ENCODE measurements at regions of chr1 and their contacts with region 1.

Region 1: DNA sequence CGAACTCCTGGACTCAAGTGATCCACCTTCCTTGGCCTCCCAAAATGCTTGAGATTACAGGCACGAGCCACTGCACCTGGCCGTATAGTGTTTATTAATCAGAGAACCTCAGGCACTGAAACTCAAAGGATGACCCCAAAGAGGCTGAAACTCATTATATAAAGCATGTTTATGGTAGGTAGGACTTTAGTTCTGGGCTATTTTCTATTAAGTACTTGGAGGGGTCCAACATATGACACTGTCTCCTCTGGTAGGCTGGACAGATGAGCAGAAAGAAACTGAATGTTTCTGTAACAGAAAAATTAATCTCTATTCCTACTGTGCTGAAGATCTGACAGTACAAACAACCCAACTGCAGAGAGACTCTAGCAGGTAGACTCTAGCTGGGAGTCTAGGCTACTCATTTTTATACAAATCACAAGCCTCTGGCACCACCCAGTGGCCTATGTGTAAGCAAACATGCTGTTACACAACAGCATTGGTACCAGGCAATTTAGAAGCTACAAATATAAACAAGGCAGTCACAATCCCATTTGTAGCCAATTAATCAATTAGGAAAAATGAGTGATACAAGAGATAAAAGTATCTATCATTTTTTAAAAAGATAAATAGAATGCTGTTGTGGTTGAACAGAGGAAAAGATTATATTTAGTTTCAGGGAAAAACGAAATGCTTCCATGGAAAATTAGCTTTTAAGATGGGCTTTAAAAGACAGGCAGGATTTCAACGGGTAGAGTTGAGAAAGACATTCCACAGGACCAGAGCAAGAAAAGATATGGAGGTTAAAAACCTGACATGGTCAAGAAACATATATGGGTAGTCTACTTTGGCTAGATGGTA is 10.4 kb downstream of the DCAF8 start:
- DNase-seq: peak; percentile 38
- ATAC-seq: peak; percentile 96
- H3K4me3 ChIP-seq: no peak overlapping the region
- H3K27ac ChIP-seq: no peak overlapping the region
- H3K4me1 ChIP-seq: peaks cover 5 to 11% of the 10 kb centered on the region in 2 experiments; a peak in 3 of 4 replicates
- H3K27me3 ChIP-seq: no peaks in the 10 kb centered on the region
- CTCF ChIP-seq: peak; percentile 69 to 83 (median 71); a peak in 5 of 6 replicates
- POLR2A ChIP-seq: no peak
- RAD21 ChIP-seq: peak; percentile 81

Region 2: GRCh38 chr1:160108888-160109662 is 142.8 kb before region 1 on chr1:
- CTCF ChIA-PET with region 1: interaction called, 30 read pairs
- POLR2A ChIA-PET with region 1: interaction called, 3 read pairs
- RAD21 ChIA-PET with region 1: no interaction called
- intact Hi-C with region 1: loop called (anchors 2 kb)
- DNase-seq: peak; percentile 69
- ATAC-seq: peak; percentile 79
- H3K4me3 ChIP-seq: no peak overlapping the region
- H3K27ac ChIP-seq: no peak overlapping the region; the same call in 1 of the 2 replicates
- H3K4me1 ChIP-seq: peaks cover 3 to 9% of the 10 kb centered on the region in 2 experiments; a peak in 2 of 4 replicates
- H3K27me3 ChIP-seq: no peaks in the 10 kb centered on the region
- CTCF ChIP-seq: peak; percentile 43 to 76 (median 74); a peak in 5 of 6 replicates
- POLR2A ChIP-seq: no peak
- RAD21 ChIP-seq: peak; percentile 49

Region 3: GRCh38 chr1:160219062-160219929 is 32.6 kb before region 1 on chr1:
- CTCF ChIA-PET with region 1: interaction called, 13 read pairs
- POLR2A ChIA-PET with region 1: no interaction called
- RAD21 ChIA-PET with region 1: interaction called in 1 of 2 experiments, 5 read pairs
- intact Hi-C with region 1: no loop called
- DNase-seq: peak; percentile 19
- ATAC-seq: peak; percentile 78
- H3K4me3 ChIP-seq: no peak overlapping the region
- H3K27ac ChIP-seq: no peak overlapping the region
- H3K4me1 ChIP-seq: no peaks in the 10 kb centered on the region
- H3K27me3 ChIP-seq: no peaks in the 10 kb centered on the region
- CTCF ChIP-seq: peak; percentile 36 to 41 (median 40); a peak in 4 of 6 replicates
- POLR2A ChIP-seq: no peak
- RAD21 ChIP-seq: peak; percentile 60

Region 4: DNA sequence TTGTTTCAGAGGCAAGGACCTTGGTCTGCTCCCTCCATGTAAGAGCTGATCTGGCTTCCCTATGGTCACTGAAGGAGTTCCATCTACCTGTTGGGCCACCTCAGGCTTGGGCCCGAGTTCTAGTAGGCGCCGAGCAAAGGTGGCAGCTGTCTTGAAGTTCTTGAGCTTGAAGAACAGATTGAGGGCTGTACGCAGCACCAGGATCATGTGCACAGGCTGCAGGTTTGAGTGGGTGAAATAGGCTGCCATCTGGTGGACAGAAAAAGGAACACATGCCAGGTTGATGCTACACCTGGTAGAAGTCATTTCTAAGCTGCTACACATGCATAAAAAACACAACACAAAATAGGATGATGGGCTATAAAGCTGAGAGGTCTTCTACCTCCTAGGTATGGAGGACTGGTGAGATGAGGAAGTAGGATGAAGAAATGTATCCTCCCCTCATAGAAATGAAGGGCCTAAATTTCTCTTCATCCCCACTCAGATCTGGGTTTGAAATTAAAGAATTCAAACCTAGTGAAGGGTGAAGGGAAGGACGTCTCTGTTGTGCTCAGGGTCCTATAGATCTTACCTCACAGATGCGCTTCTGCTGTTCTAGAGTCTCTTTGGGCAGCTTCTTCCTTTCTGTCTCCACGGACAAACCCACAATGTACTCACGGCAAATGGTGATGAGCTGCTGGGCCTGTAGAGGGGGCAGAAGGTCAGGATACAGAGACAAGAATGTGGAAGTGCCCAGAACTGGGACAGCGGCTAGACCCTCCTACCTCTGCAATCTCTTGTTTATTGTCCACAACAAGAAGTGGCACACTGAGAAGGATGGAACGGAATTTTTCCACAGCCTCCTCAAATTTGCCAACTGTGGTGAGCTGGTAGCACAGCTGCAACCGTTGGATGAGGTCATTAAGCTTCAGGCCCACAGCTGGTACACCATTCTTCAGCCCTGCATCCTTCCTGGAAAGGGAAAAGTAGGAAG is 39.6 kb after region 1 on chr1:
- CTCF ChIA-PET with region 1: interaction called, 17 read pairs
- POLR2A ChIA-PET with region 1: no interaction called
- RAD21 ChIA-PET with region 1: interaction called in 1 of 2 experiments, 6 read pairs
- intact Hi-C with region 1: no loop called
- DNase-seq: peak; percentile 37
- ATAC-seq: peak; percentile 95
- H3K4me3 ChIP-seq: no peak overlapping the region
- H3K27ac ChIP-seq: no peak overlapping the region
- H3K4me1 ChIP-seq: no peaks in the 10 kb centered on the region
- H3K27me3 ChIP-seq: no peaks in the 10 kb centered on the region
- CTCF ChIP-seq: peak; percentile 65 to 84 (median 84)
- POLR2A ChIP-seq: no peak
- RAD21 ChIP-seq: peak; percentile 62